ENCODE measurements at regions of chr10 and their contacts with region 1.

Region 1: GRCh38 chr10:89251409-89252224 is at the start of gene LIPA:
- DNase-seq: peak; percentile 91 to 97 (median 92)
- ATAC-seq: peak; percentile 99
- H3K4me3 ChIP-seq: peak within 1 kb of the TSS; percentile 48
- H3K4me1 ChIP-seq: no peaks in the 10 kb centered on the region
- CTCF ChIP-seq: no peak
- total RNA-seq, gene LIPA: 20.6 to 34.5 (median 29.6) TPM

Region 2: DNA sequence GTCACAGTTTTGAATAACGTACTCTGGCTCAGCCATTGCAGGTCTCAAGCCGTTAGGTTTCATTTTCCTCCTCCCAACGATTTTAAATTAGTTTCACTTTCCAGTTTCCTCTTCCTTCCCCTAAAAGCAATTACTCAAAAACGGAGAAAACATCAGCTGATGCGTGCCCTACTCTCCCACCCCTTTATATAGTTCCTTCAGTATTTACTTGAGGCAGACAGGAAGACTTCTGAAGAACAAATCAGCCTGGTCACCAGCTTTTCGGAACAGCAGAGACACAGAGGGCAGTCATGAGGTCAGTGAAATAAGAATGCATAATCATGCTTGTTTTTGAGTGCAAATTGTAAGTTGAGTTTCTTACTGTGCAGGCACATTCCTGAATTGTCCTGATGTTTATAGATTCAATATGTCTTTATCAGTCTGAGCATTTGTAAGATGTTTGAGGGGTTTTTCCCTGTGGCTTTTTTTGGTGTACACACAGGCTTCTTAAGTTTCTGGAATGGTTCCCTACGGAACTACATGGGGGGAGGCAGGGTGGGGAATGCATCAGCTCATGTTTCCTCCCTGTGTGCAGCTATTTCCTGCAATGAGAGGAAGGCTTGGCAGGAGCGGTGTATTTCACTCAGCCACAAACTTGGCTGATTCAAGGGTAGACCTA is 76.3 kb after region 1 on chr10 and contains the start of gene IFIT3:
- intact Hi-C with region 1: no loop called
- DNase-seq: peak in 1 of 3 donors; percentile 54
- ATAC-seq: peak; percentile 63
- H3K4me3 ChIP-seq: no peak within 1 kb of the TSS
- H3K4me1 ChIP-seq: peaks cover 4% of the 10 kb centered on the region
- CTCF ChIP-seq: no peak
- total RNA-seq, gene IFIT3: 5.8 to 12.7 (median 11.2) TPM

Region 3: GRCh38 chr10:89414146-89414878 is 162.7 kb after region 1 on chr10 and contains the start of gene IFIT5:
- intact Hi-C with region 1: loop called in 1 of 2 experiments (anchors 10 kb)
- DNase-seq: peak; percentile 74 to 85 (median 83)
- ATAC-seq: peak; percentile 91
- H3K4me3 ChIP-seq: peak within 1 kb of the TSS; percentile 35
- H3K4me1 ChIP-seq: peaks cover 14% of the 10 kb centered on the region
- CTCF ChIP-seq: no peak
- total RNA-seq, gene IFIT5: 9.8 to 19.1 (median 12.9) TPM

Region 4: GRCh38 chr10:89563861-89564478 is 312.4 kb after region 1 on chr10:
- intact Hi-C with region 1: loop called in 1 of 2 experiments (anchors 10 kb)
- DNase-seq: peak in 1 of 3 donors; percentile 57
- ATAC-seq: peak; percentile 53
- H3K4me3 ChIP-seq: no peak overlapping the region
- H3K4me1 ChIP-seq: no peaks in the 10 kb centered on the region
- CTCF ChIP-seq: peak; percentile 37

Measured in mucosa of descending colon (tissue), 3 donors.